B cell (primary cell): ENCODE measurements at regions of chr19 and their contacts with region 1.

Region 1: DNA sequence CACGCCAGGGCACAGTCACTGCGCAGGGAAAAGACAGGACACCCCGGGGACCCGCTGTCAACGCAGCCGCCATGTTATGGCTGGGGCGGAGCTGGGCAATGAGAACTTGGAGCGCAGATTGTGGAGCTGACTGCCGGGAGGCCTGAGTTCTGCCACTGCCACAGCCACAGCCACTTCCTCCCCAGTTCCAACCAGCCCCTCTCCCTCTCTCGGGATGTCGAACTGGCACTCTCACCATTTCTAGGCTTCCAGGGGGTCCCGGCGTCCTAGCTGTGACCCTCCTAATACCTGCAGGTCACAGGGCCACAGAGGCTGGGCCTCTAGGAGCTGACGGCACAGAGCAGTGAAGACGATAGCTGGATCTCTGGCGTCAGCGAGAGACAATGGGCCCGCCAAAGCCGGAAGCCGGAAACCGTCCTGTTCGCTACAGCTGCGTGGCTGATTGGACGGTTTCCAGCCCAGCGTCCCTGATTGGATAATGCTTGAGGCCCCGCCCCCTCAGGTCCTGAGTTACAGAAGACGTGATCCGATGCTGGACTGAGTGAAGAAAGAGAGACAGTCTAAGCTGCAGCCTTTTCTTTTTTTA is at the start of gene ZNF506:
- DNase-seq: peak; percentile 97
- ATAC-seq: peak; percentile 93
- H3K4me3 ChIP-seq: peak within 1 kb of the TSS; percentile 74 to 100 (median 91)
- H3K4me3 Mint-ChIP-seq: peak within 1 kb of the TSS; percentile 99
- H3K27ac ChIP-seq: peak within 1 kb of the TSS; percentile 97 to 99
- H3K27ac Mint-ChIP-seq: peak within 1 kb of the TSS; percentile 99
- H3K4me1 ChIP-seq: peaks cover 40 to 48% of the 10 kb centered on the region in 2 donors
- H3K4me1 Mint-ChIP-seq: peaks cover 51% of the 10 kb centered on the region
- H3K27me3 ChIP-seq: no peaks in the 10 kb centered on the region
- H3K27me3 Mint-ChIP-seq: no peaks in the 10 kb centered on the region
- CTCF ChIP-seq: no peak
- total RNA-seq, gene ZNF506: 67.6 and 80.3 TPM in 2 replicates

Region 2: GRCh38 chr19:19451429-19452242 is 369.8 kb before region 1 on chr19:
- CTCF ChIA-PET with region 1: no interaction called
- POLR2A ChIA-PET with region 1: no interaction called
- intact Hi-C with region 1: no loop called
- DNase-seq: no peak
- ATAC-seq: no peak
- H3K4me3 ChIP-seq: no peak overlapping the region
- H3K4me3 Mint-ChIP-seq: no peak overlapping the region
- H3K27ac ChIP-seq: no peak overlapping the region
- H3K27ac Mint-ChIP-seq: peak overlapping the region; percentile 32
- H3K4me1 ChIP-seq: peaks cover 9 to 20% of the 10 kb centered on the region in 2 donors
- H3K4me1 Mint-ChIP-seq: peaks cover 47% of the 10 kb centered on the region
- H3K27me3 ChIP-seq: no peaks in the 10 kb centered on the region
- H3K27me3 Mint-ChIP-seq: no peaks in the 10 kb centered on the region
- CTCF ChIP-seq: no peak

Region 3: DNA sequence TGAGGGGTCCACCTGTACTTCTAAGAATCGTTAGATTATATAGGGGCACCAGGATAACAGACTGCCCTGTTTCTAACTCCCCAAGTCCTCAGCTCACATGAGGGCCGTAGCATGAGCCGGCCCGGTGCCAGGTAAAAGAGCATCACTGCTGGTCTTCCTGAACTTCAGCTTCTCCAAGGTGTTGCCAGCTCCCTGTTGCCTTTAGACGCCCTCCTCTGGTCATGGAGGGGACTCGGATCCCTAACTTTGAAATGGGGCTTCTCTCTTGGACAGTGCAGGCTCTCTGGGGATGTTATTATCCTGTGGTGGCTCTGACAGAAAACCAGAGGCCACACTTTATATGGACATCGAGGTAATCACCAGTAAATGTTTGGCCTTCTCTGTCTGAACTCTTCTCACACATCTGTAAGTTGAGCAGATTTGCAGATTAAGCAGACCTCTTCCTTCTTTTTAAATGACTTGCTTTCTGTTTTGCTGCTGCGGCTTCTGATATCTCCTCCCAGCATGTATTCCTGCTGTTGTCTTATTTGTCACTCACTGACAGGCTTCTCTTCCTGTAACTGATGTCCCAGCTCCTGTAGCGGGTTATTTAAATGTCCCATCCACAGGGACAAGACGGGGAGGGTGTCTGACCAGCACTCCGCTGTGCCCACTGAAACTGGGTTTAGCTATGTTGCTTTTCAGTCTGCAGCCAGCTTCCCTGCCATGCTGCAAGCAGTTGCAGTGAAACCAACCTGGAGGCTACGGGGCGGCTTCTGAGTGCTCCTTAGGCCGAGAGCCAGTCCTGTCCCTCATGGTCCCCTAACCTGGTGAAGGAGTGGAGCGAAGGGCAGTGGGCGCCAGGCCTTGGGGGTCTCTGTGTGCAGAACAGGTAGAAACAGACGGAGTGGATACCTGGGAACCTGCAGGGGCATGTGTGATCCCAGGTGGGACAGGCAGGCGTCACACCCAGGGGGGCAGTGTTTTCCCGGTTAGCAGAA is 345.3 kb before region 1 on chr19:
- CTCF ChIA-PET with region 1: no interaction called
- POLR2A ChIA-PET with region 1: no interaction called
- intact Hi-C with region 1: no loop called
- DNase-seq: no peak
- ATAC-seq: no peak
- H3K4me3 ChIP-seq: no peak overlapping the region
- H3K4me3 Mint-ChIP-seq: no peak overlapping the region
- H3K27ac ChIP-seq: peak overlapping the region in 1 of 2 donors; percentile 34
- H3K27ac Mint-ChIP-seq: no peak overlapping the region
- H3K4me1 ChIP-seq: peaks cover 17 to 39% of the 10 kb centered on the region in 2 donors
- H3K4me1 Mint-ChIP-seq: peaks cover 55% of the 10 kb centered on the region
- H3K27me3 ChIP-seq: no peaks in the 10 kb centered on the region
- H3K27me3 Mint-ChIP-seq: no peaks in the 10 kb centered on the region
- CTCF ChIP-seq: no peak

Region 4: DNA sequence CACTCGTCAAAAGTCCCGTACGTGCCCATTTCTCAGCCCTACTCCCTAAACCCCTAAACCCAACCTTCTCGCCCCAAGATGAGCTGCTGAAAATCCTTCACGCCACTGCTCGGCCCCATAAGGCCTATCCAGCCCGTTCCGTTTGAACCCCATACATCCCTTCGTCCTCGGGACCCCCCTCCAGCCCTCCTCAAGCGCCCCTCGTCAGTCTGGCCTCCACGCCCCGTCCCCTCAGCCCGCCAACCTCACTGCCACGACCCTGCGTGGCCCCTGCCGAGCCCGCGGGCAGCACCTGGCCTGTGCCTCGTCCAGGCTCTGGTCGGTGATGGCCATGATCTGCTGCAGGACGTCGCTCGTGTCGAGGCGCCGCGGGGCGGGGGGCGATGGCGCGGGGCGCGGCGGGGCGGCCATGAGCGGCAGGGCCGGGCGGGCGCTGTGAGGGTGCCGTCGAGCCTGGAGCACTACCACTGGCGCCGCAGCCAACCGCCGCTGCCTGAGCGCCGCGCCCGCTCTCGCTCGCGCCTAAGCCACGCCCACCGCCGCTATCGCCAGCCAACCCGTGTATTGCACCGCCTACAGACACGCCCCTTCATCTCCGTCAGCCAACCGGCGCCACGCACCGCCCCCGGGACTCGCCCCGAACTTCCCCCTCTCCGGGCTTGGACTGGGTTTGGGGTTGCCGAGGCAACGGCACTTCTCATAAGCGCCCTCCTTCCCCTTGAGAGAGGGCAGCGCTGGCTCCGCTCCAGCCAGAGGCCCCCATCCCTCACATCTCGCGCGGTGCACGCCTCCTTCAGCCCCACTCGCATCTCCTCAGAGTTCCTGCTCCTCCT is 203.0 kb before region 1 on chr19 and contains the start of gene PBX4:
- CTCF ChIA-PET with region 1: no interaction called
- POLR2A ChIA-PET with region 1: no interaction called
- intact Hi-C with region 1: loop called (anchors 5 kb)
- DNase-seq: peak; percentile 99
- ATAC-seq: peak; percentile 99
- H3K4me3 ChIP-seq: peak within 1 kb of the TSS in 4 of 5 experiments; percentile 48 to 64 (median 56)
- H3K4me3 Mint-ChIP-seq: peak within 1 kb of the TSS; percentile 89
- H3K27ac ChIP-seq: peak within 1 kb of the TSS; percentile 51 to 70
- H3K27ac Mint-ChIP-seq: peak within 1 kb of the TSS; percentile 89
- H3K4me1 ChIP-seq: peaks cover 11 to 16% of the 10 kb centered on the region in 2 donors
- H3K4me1 Mint-ChIP-seq: peaks cover 24% of the 10 kb centered on the region
- H3K27me3 ChIP-seq: no peaks in the 10 kb centered on the region
- H3K27me3 Mint-ChIP-seq: no peaks in the 10 kb centered on the region
- CTCF ChIP-seq: no peak
- total RNA-seq, gene PBX4: 11.7 and 11.8 TPM in 2 replicates

Region 5: DNA sequence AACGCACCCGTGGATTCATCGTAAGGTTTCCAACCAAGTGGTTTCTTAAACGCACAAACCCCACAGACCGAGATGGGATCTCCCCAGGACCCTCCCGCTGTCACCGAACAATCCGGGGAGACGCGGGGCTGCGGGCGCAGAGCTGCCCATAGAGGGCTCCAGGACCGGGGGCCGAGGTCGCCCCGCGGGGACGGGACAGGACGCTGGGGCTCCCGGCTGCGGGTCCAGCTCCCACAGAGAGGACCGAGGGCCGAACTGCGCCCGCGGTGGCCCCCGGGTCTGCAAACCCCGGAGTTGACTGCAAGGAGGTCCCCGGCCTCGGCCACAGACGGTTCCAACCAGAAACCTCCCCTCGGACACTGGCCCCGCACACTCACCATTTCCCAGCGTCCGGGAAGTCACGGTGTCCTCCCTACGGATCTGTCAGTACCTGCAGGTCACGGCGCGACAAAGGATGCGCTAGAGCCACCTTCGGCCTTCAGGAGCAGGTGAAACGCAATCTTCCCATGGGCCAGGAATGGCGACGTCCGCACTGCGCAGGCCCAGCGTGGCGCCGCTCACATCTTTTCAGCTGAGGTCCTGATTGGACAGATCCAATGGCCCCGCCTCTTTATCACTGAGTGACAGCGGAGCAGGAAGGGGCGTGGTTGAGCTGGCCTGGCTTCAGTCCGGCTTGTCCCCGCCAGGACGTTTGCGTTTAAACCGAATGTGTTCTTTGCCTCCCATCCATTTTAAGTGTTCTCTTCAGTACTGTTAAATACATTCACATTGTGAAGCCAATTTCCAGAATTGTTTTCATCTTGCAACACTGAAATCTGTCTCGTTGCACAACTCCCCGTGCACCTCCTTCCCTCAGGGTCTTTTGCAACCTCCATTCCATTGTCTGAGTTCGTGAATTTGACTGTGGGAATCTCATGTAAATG is 88.6 kb before region 1 on chr19 and contains the start of gene ZNF14:
- CTCF ChIA-PET with region 1: no interaction called
- POLR2A ChIA-PET with region 1: interaction called, 3 read pairs
- intact Hi-C with region 1: loop called (anchors 1 kb)
- DNase-seq: peak; percentile 94
- ATAC-seq: peak; percentile 100
- H3K4me3 ChIP-seq: peak within 1 kb of the TSS; percentile 59 to 95 (median 94)
- H3K4me3 Mint-ChIP-seq: peak within 1 kb of the TSS; percentile 99
- H3K27ac ChIP-seq: peak within 1 kb of the TSS; percentile 49 to 76
- H3K27ac Mint-ChIP-seq: peak within 1 kb of the TSS; percentile 96
- H3K4me1 ChIP-seq: peaks cover 11 to 17% of the 10 kb centered on the region in 2 donors
- H3K4me1 Mint-ChIP-seq: peaks cover 27% of the 10 kb centered on the region
- H3K27me3 ChIP-seq: no peaks in the 10 kb centered on the region
- H3K27me3 Mint-ChIP-seq: no peaks in the 10 kb centered on the region
- CTCF ChIP-seq: no peak
- total RNA-seq, gene ZNF14: 21.0 and 22.5 TPM in 2 replicates

Region 6: GRCh38 chr19:19776041-19777008 is 45.1 kb before region 1 on chr19:
- CTCF ChIA-PET with region 1: interaction called, 5 read pairs
- POLR2A ChIA-PET with region 1: interaction called, 17 read pairs
- intact Hi-C with region 1: loop called (anchors 1 kb)
- DNase-seq: peak; percentile 94
- ATAC-seq: peak; percentile 99
- H3K4me3 ChIP-seq: peak overlapping the region; percentile 71 to 94 (median 90)
- H3K4me3 Mint-ChIP-seq: peak overlapping the region; percentile 97
- H3K27ac ChIP-seq: peak overlapping the region; percentile 8 to 78
- H3K27ac Mint-ChIP-seq: peak overlapping the region; percentile 91
- H3K4me1 ChIP-seq: peaks cover 17 to 24% of the 10 kb centered on the region in 2 donors
- H3K4me1 Mint-ChIP-seq: peaks cover 35% of the 10 kb centered on the region
- H3K27me3 ChIP-seq: no peaks in the 10 kb centered on the region
- H3K27me3 Mint-ChIP-seq: no peaks in the 10 kb centered on the region
- CTCF ChIP-seq: no peak

Region 7: GRCh38 chr19:19860756-19861390 is 39.4 kb after region 1 on chr19:
- CTCF ChIA-PET with region 1: interaction called, 9 read pairs
- POLR2A ChIA-PET with region 1: interaction called, 33 read pairs
- intact Hi-C with region 1: loop called (anchors 1 kb)
- DNase-seq: peak; percentile 76
- ATAC-seq: peak; percentile 53
- H3K4me3 ChIP-seq: peak overlapping the region in 4 of 5 experiments; percentile 44 to 65 (median 54)
- H3K4me3 Mint-ChIP-seq: peak overlapping the region; percentile 88
- H3K27ac ChIP-seq: peak overlapping the region; percentile 56 to 60
- H3K27ac Mint-ChIP-seq: peak overlapping the region; percentile 76
- H3K4me1 ChIP-seq: peaks cover 5% of the 10 kb centered on the region in 2 donors
- H3K4me1 Mint-ChIP-seq: peaks cover 26% of the 10 kb centered on the region
- H3K27me3 ChIP-seq: no peaks in the 10 kb centered on the region
- H3K27me3 Mint-ChIP-seq: no peaks in the 10 kb centered on the region
- CTCF ChIP-seq: no peak

Region 8: DNA sequence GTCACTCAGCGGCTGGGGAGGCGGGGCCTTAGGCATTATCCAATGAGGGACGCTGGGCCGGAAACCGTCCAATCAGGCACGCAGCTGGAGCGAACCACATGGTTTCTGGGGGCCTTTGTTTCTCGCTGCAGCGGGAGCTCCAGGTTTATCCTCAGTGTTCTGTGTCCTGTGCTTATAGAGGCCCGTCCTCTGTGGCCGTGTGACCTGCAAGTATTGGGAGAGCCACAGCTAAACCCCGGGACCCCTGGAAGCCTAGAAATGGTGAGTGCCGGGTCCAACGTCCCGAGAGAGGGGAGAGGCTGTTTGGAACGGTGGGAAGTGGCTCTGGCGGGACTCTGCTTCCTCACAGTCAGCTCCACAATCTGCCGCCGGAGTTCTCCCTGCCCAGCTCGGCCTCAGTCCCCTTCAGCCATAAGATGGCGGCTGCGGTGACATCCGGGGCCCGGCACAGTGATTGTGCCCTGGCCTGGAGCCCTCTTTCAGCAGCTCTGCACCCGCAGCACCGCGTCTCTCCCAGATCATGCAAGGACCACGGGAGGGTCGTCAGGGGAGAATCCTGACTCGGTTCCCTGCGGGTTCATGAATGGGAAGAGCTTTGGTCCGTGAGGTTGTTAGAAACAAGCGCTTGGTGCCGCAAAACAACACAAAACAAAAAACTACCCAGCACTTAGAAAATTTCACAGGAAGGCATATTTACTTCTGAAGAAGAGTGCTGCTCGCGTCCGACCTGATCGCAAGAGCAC is 44.5 kb after region 1 on chr19 and contains the start of gene ZNF253:
- CTCF ChIA-PET with region 1: interaction called, 9 read pairs
- POLR2A ChIA-PET with region 1: interaction called, 33 read pairs
- intact Hi-C with region 1: loop called (anchors 1 kb)
- DNase-seq: peak; percentile 94
- ATAC-seq: peak; percentile 87
- H3K4me3 ChIP-seq: peak within 1 kb of the TSS; percentile 78 to 97 (median 93)
- H3K4me3 Mint-ChIP-seq: peak within 1 kb of the TSS; percentile 100
- H3K27ac ChIP-seq: peak within 1 kb of the TSS; percentile 88 to 91
- H3K27ac Mint-ChIP-seq: peak within 1 kb of the TSS; percentile 98
- H3K4me1 ChIP-seq: peaks cover 15 to 19% of the 10 kb centered on the region in 2 donors
- H3K4me1 Mint-ChIP-seq: peaks cover 35% of the 10 kb centered on the region
- H3K27me3 ChIP-seq: no peaks in the 10 kb centered on the region
- H3K27me3 Mint-ChIP-seq: no peaks in the 10 kb centered on the region
- CTCF ChIP-seq: no peak
- total RNA-seq, gene ZNF253: 28.6 and 33.7 TPM in 2 replicates

Region 9: GRCh38 chr19:19877724-19878123 is 56.3 kb after region 1 on chr19:
- CTCF ChIA-PET with region 1: no interaction called
- POLR2A ChIA-PET with region 1: no interaction called
- intact Hi-C with region 1: no loop called
- DNase-seq: no peak
- ATAC-seq: no peak
- H3K4me3 ChIP-seq: no peak overlapping the region
- H3K4me3 Mint-ChIP-seq: no peak overlapping the region
- H3K27ac ChIP-seq: no peak overlapping the region
- H3K27ac Mint-ChIP-seq: no peak overlapping the region
- H3K4me1 ChIP-seq: no peaks in the 10 kb centered on the region
- H3K4me1 Mint-ChIP-seq: peaks cover 4% of the 10 kb centered on the region
- H3K27me3 ChIP-seq: no peaks in the 10 kb centered on the region
- H3K27me3 Mint-ChIP-seq: no peaks in the 10 kb centered on the region
- CTCF ChIP-seq: no peak

Region 10: DNA sequence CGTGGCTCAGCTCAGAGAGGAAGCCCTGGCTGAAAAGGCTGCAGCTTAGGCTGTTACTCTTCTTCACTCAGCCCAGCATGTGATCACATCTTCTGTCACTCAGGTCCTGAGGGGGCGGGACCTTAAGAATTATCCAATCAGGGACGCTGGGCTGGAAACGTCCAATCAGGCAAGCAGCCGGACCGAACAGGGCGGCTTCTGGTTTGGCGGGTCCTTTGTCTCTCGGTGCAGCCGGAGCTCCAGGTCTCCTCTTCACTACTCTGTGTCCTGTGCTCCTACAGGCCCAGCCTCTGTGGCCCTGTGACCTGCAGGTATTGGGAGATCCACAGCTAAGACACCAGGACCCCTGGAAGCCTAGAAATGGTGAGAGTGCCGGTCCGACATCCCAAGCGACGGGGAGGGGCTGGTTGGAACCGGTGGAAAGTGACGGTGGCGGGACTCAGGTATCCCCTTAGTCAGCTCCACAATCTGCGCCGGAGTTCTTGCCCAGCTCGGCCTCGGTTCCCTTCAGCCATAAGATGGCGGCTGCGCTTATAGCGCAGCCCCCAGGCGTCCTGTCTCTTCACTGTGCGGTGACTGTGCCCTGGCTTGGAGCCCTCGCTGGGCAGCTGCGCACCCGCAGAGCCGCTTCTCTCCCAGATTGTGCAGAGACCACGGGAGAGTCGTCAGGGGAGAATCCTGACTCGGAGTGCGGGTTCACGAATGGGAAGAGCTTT is 79.4 kb after region 1 on chr19 and contains the start of gene ZNF93:
- CTCF ChIA-PET with region 1: interaction called, 5 read pairs
- POLR2A ChIA-PET with region 1: interaction called, 20 read pairs
- intact Hi-C with region 1: loop called (anchors 1 kb)
- DNase-seq: peak; percentile 94
- ATAC-seq: peak; percentile 98
- H3K4me3 ChIP-seq: peak within 1 kb of the TSS; percentile 85 to 94 (median 87)
- H3K4me3 Mint-ChIP-seq: peak within 1 kb of the TSS; percentile 98
- H3K27ac ChIP-seq: peak within 1 kb of the TSS; percentile 71 to 74
- H3K27ac Mint-ChIP-seq: peak within 1 kb of the TSS; percentile 91
- H3K4me1 ChIP-seq: peaks cover 6 to 16% of the 10 kb centered on the region in 2 donors
- H3K4me1 Mint-ChIP-seq: peaks cover 41% of the 10 kb centered on the region
- H3K27me3 ChIP-seq: no peaks in the 10 kb centered on the region
- H3K27me3 Mint-ChIP-seq: no peaks in the 10 kb centered on the region
- CTCF ChIP-seq: no peak
- total RNA-seq, gene ZNF93: 12.5 and 13.3 TPM in 2 replicates